Activated naive CD8-positive, alpha-beta T cell treated with anti-CD3 and anti-CD28 coated beads, Interleukin-2, amount 10 ng/mL, durations not matched to agents 7 days and 5 days (primary cell): ENCODE measurements at regions of chr12 and their contacts with region 1.

Region 1: GRCh38 chr12:64610149-64610678 is at the start of gene RASSF3:
- DNase-seq: peak; percentile 88
- ATAC-seq: peak; percentile 75
- H3K4me3 Mint-ChIP-seq: peak within 1 kb of the TSS; percentile 95
- H3K27ac Mint-ChIP-seq: peak within 1 kb of the TSS; percentile 100
- H3K4me1 Mint-ChIP-seq: peaks cover 31% of the 10 kb centered on the region
- H3K27me3 Mint-ChIP-seq: no peaks in the 10 kb centered on the region
- total RNA-seq, gene RASSF3: 69.5 to 74.1 TPM

Region 2: GRCh38 chr12:64669270-64669842 is 59.1 kb after region 1 on chr12:
- POLR2A ChIA-PET with region 1: interaction called, 49 read pairs
- DNase-seq: peak; percentile 68
- ATAC-seq: peak; percentile 93
- H3K4me3 Mint-ChIP-seq: peak overlapping the region; percentile 91
- H3K27ac Mint-ChIP-seq: peak overlapping the region; percentile 97
- H3K4me1 Mint-ChIP-seq: peaks cover 79% of the 10 kb centered on the region
- H3K27me3 Mint-ChIP-seq: no peaks in the 10 kb centered on the region

Region 3: GRCh38 chr12:64679487-64679983 is 69.3 kb after region 1 on chr12:
- POLR2A ChIA-PET with region 1: interaction called, 36 read pairs
- DNase-seq: no peak
- ATAC-seq: peak; percentile 59
- H3K4me3 Mint-ChIP-seq: peak overlapping the region; percentile 82
- H3K27ac Mint-ChIP-seq: peak overlapping the region; percentile 90
- H3K4me1 Mint-ChIP-seq: peaks cover 74% of the 10 kb centered on the region
- H3K27me3 Mint-ChIP-seq: no peaks in the 10 kb centered on the region

Region 4: DNA sequence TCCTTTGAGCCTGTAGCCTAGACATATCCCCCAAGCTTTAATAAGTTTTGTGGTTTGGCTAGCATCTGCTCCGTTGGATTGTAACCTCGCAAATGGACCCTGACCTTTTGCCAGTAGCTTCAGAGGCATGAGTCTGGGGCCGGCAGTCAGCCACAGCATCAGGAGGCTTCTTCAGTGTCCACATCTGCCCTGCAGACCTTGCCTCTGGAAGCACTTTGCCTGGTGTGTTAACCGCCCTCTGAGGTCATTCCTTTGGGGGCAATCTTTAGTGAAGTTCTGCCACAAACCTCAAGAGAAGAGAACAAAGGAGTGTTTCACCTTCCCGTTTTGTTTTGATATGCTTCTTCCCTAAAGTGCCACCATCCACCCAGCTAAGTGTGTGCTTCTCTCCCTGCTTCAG is 77.6 kb after region 1 on chr12:
- POLR2A ChIA-PET with region 1: interaction called, 17 read pairs
- DNase-seq: no peak
- ATAC-seq: peak; percentile 12
- H3K4me3 Mint-ChIP-seq: peak overlapping the region; percentile 64
- H3K27ac Mint-ChIP-seq: peak overlapping the region; percentile 81
- H3K4me1 Mint-ChIP-seq: peaks cover 65% of the 10 kb centered on the region
- H3K27me3 Mint-ChIP-seq: no peaks in the 10 kb centered on the region